Activated naive CD4-positive, alpha-beta T cell treated with anti-CD3 and anti-CD28 coated beads for 36 hours (primary cell): ENCODE measurements at regions of chr9 and their contacts with region 1.

Region 1: GRCh38 chr9:272251-273213 is 57.9 kb downstream of the DOCK8 start:
- DNase-seq: peak; percentile 88
- H3K4me3 Mint-ChIP-seq: peak overlapping the region; percentile 94
- H3K27ac Mint-ChIP-seq: peak overlapping the region; percentile 99
- H3K4me1 Mint-ChIP-seq: peaks cover 51% of the 10 kb centered on the region
- H3K27me3 Mint-ChIP-seq: no peaks in the 10 kb centered on the region

Region 2: DNA sequence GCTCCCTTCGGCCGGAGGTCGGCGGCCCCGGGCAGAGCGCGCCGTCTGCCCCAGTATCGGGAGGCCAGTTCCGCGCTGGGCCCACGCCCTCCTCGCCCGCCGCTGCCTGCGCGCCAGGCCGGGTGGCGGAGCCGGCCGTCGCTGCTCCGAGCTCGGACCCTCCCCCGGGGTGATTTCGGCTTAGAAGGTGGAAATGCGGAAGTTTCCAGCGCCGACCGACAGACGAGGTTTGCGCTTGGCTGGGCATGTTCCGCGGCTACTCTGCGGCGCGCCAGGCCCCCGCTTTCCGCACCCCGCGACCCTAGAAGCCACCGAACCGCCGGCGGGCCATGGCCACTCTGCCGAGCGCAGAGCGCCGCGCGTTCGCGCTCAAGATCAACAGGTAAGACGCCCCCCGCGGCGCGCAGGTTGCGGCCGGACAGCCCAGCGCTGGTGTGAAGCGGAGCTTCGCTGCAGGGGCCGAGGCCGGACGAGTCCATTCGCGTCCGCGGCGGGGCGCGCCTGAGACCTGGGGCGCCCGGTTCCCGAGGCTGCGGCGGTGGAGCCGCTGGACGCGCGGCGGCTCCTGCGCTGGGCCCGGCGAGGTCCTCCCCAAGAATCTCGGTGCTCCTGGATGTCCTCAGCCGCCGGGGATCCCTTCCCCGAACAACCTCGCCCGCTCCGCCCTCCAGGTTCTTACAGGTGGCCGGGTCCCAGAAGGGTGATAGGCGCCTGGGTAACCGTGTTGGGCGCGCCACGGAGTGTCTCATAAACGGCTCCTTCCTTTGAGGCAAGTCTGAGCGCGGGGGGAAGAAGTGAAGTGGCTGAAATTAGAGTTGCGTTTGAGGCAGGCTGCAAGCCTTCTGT is 57.7 kb before region 1 on chr9 and contains the start of gene DOCK8:
- CTCF ChIA-PET with region 1: no interaction called
- intact Hi-C with region 1: loop called (anchors 1 kb)
- DNase-seq: peak; percentile 66
- H3K4me3 Mint-ChIP-seq: peak within 1 kb of the TSS; percentile 76
- H3K27ac Mint-ChIP-seq: no peak within 1 kb of the TSS
- H3K4me1 Mint-ChIP-seq: peaks cover 3% of the 10 kb centered on the region
- H3K27me3 Mint-ChIP-seq: peaks cover 9% of the 10 kb centered on the region
- total RNA-seq, gene DOCK8: 110 to 114 TPM

Region 3: GRCh38 chr9:297104-297972 is 24.8 kb after region 1 on chr9:
- CTCF ChIA-PET with region 1: no interaction called
- intact Hi-C with region 1: no loop called
- DNase-seq: peak; percentile 25
- H3K4me3 Mint-ChIP-seq: no peak overlapping the region
- H3K27ac Mint-ChIP-seq: peak overlapping the region; percentile 36
- H3K4me1 Mint-ChIP-seq: peaks cover 45% of the 10 kb centered on the region
- H3K27me3 Mint-ChIP-seq: no peaks in the 10 kb centered on the region

Region 4: DNA sequence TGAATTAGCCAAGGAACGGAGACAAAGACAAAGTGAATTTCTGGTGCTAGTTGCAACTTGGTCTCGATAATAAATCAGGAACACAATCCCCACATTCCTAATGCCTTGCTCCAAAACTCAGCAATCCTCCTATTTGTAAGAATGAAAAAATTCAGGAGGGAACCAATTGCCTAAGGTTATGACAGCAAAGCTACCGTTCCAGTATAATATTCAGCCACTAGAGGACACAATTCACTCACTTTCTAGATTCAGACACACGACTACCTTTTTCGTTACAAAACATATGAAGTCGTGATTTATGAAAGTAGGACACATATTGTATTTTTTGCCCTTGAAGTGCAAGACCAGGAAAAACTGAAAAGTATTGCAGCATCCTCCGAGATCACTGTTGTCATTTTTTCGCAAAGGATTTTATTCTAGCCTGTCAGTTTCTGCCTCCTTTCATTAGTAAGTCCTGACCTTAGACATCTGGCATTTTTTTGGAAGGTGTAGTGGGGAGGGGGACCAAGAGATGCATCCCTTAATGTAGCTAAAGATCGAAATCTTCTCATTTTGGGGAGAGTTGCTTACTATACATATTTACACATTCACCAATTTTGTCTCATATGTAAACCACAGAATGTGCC is 75.2 kb after region 1 on chr9:
- CTCF ChIA-PET with region 1: no interaction called
- intact Hi-C with region 1: no loop called
- DNase-seq: no peak
- H3K4me3 Mint-ChIP-seq: no peak overlapping the region
- H3K27ac Mint-ChIP-seq: no peak overlapping the region
- H3K4me1 Mint-ChIP-seq: peaks cover 23% of the 10 kb centered on the region
- H3K27me3 Mint-ChIP-seq: no peaks in the 10 kb centered on the region

Region 5: DNA sequence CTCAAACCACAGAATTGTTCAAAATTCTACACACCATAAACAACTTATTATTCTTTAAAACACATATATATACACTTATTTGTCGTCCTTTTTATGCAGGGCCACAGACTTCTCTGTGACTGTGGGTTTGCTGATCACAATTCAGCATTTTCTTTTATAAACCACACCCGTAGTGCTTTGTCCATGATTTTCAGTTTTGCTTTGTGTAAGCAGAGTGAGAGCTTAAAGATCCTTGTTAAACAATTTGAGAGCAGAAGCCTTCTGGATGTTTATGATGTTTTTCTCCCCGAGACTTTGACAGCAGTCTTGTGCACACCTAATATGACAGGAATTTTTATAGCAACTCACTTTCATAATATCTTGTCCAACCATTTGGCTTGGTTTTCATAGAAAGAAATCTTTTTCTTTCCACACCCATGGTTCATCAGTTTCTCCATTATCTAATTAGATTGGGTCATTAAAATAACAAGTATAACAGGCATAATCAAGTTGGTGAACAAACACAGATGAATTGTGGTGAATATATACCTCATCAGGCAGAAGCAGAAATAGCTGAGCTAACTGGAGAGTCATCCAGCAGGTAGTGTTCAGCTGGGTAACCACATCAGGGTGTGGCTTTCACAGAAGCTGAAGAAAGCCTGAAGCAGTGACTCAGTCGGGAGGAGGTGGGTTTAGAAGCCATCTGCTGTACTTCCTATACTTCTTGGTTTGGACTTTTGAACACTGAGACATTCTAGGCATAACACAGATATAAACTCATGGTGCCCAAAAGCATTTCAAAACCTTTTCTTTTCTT is 174.9 kb after region 1 on chr9:
- CTCF ChIA-PET with region 1: no interaction called
- intact Hi-C with region 1: loop called (anchors 1 kb)
- DNase-seq: peak; percentile 89
- H3K4me3 Mint-ChIP-seq: no peak overlapping the region
- H3K27ac Mint-ChIP-seq: peak overlapping the region; percentile 57
- H3K4me1 Mint-ChIP-seq: peaks cover 23% of the 10 kb centered on the region
- H3K27me3 Mint-ChIP-seq: no peaks in the 10 kb centered on the region

Region 6: DNA sequence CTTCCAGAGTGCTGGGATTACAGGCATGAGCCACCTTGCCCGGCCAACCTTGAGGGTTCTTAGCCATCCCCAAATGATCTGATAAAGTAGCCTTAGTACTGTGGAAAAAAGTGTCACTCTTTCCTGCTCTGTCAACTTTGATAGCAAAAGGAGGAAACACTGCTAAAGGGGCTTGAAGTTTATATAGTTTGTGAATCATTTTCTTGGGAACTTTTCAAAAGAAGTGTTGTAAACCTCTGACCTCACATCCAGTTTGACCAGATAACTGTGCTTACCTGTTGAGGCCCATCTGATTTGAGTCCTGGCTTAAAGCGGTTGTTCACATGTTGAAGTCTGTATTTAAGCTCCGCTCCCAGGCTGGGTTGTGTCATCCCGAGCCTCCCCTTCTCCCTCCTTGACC is 245.5 kb after region 1 on chr9:
- CTCF ChIA-PET with region 1: no interaction called
- intact Hi-C with region 1: loop called (anchors 5 kb)
- DNase-seq: no peak
- H3K4me3 Mint-ChIP-seq: peak overlapping the region; percentile 69
- H3K27ac Mint-ChIP-seq: peak overlapping the region; percentile 73
- H3K4me1 Mint-ChIP-seq: peaks cover 78% of the 10 kb centered on the region
- H3K27me3 Mint-ChIP-seq: no peaks in the 10 kb centered on the region